B cell (primary cell): ENCODE measurements at regions of chr3 and their contacts with region 1.

Region 1: GRCh38 chr3:141738022-141738890 is at the start of gene RNF7:
- DNase-seq: peak; percentile 98
- ATAC-seq: peak; percentile 95
- H3K4me3 ChIP-seq: peak within 1 kb of the TSS; percentile 93 to 99 (median 95)
- H3K4me3 Mint-ChIP-seq: peak within 1 kb of the TSS; percentile 90
- H3K27ac ChIP-seq: peak within 1 kb of the TSS; percentile 81 to 87
- H3K27ac Mint-ChIP-seq: peak within 1 kb of the TSS; percentile 97
- H3K4me1 ChIP-seq: peaks cover 23 to 30% of the 10 kb centered on the region in 2 donors
- H3K4me1 Mint-ChIP-seq: peaks cover 44% of the 10 kb centered on the region
- H3K27me3 ChIP-seq: no peaks in the 10 kb centered on the region
- H3K27me3 Mint-ChIP-seq: no peaks in the 10 kb centered on the region
- CTCF ChIP-seq: peak; percentile 85
- total RNA-seq, gene RNF7: 40.9 and 47.2 TPM in 2 replicates

Region 2: DNA sequence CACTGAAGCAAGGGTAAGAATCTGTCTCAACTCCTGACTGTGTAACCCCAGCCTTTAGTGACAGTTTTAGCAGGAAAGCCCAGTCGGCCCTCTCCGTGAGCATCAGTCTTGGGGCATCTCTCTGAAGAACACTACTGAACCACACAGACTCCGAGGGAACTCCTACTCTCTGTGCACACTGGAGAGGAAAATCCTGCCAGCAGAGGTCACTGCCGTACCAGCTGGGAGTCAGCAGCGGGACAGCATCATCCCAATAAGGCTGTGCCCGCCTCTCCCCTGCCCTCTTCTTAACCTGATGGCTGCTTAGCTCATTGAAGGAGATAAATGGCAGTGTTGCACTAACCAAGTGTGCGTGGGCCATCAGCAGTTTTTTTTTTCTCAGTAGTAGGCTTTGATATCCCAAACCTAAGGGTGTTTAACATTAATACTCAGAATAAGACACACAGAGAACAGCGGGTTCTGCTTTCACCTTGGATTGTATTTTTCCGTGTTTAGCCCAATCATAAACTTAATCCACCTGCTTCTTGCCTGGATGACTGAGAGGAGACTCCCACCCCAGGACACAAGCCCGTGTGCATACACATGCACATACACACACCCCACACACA is 278.1 kb before region 1 on chr3:
- CTCF ChIA-PET with region 1: no interaction called
- POLR2A ChIA-PET with region 1: no interaction called
- intact Hi-C with region 1: loop called (anchors 1 kb)
- DNase-seq: peak; percentile 85
- ATAC-seq: peak; percentile 99
- H3K4me3 ChIP-seq: no peak overlapping the region
- H3K4me3 Mint-ChIP-seq: no peak overlapping the region
- H3K27ac ChIP-seq: no peak overlapping the region
- H3K27ac Mint-ChIP-seq: no peak overlapping the region
- H3K4me1 ChIP-seq: peaks cover 9 to 10% of the 10 kb centered on the region in 2 donors
- H3K4me1 Mint-ChIP-seq: peaks cover 13% of the 10 kb centered on the region
- H3K27me3 ChIP-seq: no peaks in the 10 kb centered on the region
- H3K27me3 Mint-ChIP-seq: no peaks in the 10 kb centered on the region
- CTCF ChIP-seq: peak; percentile 92

Region 3: GRCh38 chr3:141796081-141796888 is 58.0 kb after region 1 on chr3:
- CTCF ChIA-PET with region 1: interaction called, 3 read pairs
- POLR2A ChIA-PET with region 1: no interaction called
- intact Hi-C with region 1: loop called (anchors 1 kb)
- DNase-seq: peak; percentile 68
- ATAC-seq: peak; percentile 88
- H3K4me3 ChIP-seq: peak overlapping the region in 3 of 5 experiments; percentile 53 to 62 (median 61)
- H3K4me3 Mint-ChIP-seq: peak overlapping the region; percentile 85
- H3K27ac ChIP-seq: peak overlapping the region; percentile 19 to 50
- H3K27ac Mint-ChIP-seq: peak overlapping the region; percentile 93
- H3K4me1 ChIP-seq: peaks cover 21 to 26% of the 10 kb centered on the region in 2 donors
- H3K4me1 Mint-ChIP-seq: peaks cover 34% of the 10 kb centered on the region
- H3K27me3 ChIP-seq: no peaks in the 10 kb centered on the region
- H3K27me3 Mint-ChIP-seq: no peaks in the 10 kb centered on the region
- CTCF ChIP-seq: no peak

Region 4: DNA sequence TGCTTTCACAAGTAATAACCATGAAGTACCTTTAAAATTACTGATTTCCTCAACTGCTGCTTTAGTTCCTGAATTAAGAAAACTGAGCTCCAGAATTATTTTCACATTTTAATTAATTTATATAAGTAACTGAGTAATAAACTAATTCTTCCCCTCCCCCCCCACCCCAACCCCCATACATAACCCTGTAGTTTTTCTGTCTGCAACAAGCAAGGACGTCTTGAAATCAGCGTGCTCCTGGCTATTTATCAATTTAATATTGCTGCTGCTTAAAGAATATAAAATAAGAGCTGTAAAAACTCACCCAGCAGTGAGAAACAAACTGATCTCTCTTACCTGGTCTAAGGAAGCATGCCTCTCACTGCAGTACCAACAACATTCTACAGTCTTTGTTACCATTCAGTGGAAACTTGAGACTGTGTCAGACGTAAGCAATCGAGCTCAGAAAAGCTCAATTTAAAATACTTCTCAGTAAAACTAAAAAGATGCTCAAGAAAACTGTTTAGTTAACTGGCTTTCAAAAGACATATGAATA is 290.1 kb after region 1 on chr3:
- CTCF ChIA-PET with region 1: no interaction called
- POLR2A ChIA-PET with region 1: no interaction called
- intact Hi-C with region 1: loop called (anchors 2 kb)
- DNase-seq: peak; percentile 73
- ATAC-seq: peak; percentile 69
- H3K4me3 ChIP-seq: peak overlapping the region; percentile 26 to 72 (median 56)
- H3K4me3 Mint-ChIP-seq: peak overlapping the region; percentile 90
- H3K27ac ChIP-seq: no peak overlapping the region
- H3K27ac Mint-ChIP-seq: peak overlapping the region; percentile 21
- H3K4me1 ChIP-seq: peaks cover 3% of the 10 kb centered on the region in 2 donors
- H3K4me1 Mint-ChIP-seq: peaks cover 24% of the 10 kb centered on the region
- H3K27me3 ChIP-seq: no peaks in the 10 kb centered on the region
- H3K27me3 Mint-ChIP-seq: no peaks in the 10 kb centered on the region
- CTCF ChIP-seq: no peak

Region 5: GRCh38 chr3:142447852-142448823 is 709.9 kb after region 1 on chr3 and contains the start of gene XRN1:
- CTCF ChIA-PET with region 1: interaction called, 3 read pairs
- POLR2A ChIA-PET with region 1: no interaction called
- intact Hi-C with region 1: loop called (anchors 2 kb)
- DNase-seq: peak; percentile 94
- ATAC-seq: peak; percentile 98
- H3K4me3 ChIP-seq: peak within 1 kb of the TSS; percentile 85 to 100 (median 98)
- H3K4me3 Mint-ChIP-seq: peak within 1 kb of the TSS; percentile 99
- H3K27ac ChIP-seq: peak within 1 kb of the TSS; percentile 97 to 100
- H3K27ac Mint-ChIP-seq: peak within 1 kb of the TSS; percentile 100
- H3K4me1 ChIP-seq: peaks cover 18 to 24% of the 10 kb centered on the region in 2 donors
- H3K4me1 Mint-ChIP-seq: peaks cover 41% of the 10 kb centered on the region
- H3K27me3 ChIP-seq: no peaks in the 10 kb centered on the region
- H3K27me3 Mint-ChIP-seq: no peaks in the 10 kb centered on the region
- CTCF ChIP-seq: no peak
- total RNA-seq, gene XRN1: 78.6 and 91.8 TPM in 2 replicates

Region 6: DNA sequence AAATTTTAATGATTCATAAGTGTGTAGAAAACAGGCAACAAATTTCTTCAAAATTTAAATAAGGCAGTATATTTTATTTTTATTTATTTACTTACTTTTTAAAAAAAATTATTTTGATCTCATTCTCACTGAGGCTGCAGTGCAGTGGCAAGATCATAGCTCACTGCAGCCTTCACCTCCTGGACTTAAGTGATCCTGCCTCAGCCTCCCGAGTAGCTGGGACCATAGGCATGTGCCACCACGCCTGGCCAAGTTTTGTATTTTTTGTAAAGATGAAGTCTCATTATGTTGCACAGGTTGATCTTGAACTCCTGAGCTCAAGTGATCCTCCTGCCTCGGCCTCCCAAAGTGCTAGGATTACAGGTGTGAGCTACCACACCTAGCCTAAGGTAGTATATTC is 770.8 kb after region 1 on chr3:
- CTCF ChIA-PET with region 1: no interaction called
- POLR2A ChIA-PET with region 1: no interaction called
- intact Hi-C with region 1: no loop called
- DNase-seq: no peak
- ATAC-seq: no peak
- H3K4me3 ChIP-seq: no peak overlapping the region
- H3K4me3 Mint-ChIP-seq: no peak overlapping the region
- H3K27ac ChIP-seq: no peak overlapping the region
- H3K27ac Mint-ChIP-seq: no peak overlapping the region
- H3K4me1 ChIP-seq: no peaks in the 10 kb centered on the region
- H3K4me1 Mint-ChIP-seq: no peaks in the 10 kb centered on the region
- H3K27me3 ChIP-seq: no peaks in the 10 kb centered on the region
- H3K27me3 Mint-ChIP-seq: no peaks in the 10 kb centered on the region
- CTCF ChIP-seq: no peak

Region 7: DNA sequence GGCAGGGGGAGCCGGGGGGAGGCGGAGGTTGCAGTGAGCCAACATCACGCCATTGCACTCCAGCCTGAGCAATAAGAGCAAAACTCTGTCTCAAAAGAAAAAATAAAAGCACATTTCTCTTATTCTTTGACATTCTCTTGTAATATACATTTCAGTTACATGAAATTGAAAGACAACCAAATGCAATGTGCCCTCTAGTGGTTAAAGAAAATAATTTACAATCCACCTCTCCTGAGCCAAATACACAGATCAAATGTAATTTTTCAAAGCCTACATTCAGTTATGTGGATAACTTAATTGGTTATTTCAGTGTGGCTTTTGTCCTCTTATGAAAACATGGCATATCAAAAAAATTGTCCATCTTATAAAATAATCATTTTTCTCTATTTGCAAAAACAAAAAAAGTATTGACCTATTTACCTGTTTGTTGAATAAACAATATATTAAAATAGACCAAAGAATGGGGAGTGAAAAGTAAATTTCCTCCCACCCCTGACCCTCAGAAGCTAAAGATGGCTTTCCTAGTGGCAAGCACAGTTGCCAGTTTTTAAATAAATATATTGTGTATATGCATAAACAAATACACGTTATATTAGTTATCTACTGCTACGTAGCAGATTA is 1248.9 kb after region 1 on chr3:
- CTCF ChIA-PET with region 1: no interaction called
- POLR2A ChIA-PET with region 1: no interaction called
- intact Hi-C with region 1: no loop called
- DNase-seq: peak; percentile 50
- ATAC-seq: no peak
- H3K4me3 ChIP-seq: no peak overlapping the region
- H3K4me3 Mint-ChIP-seq: no peak overlapping the region
- H3K27ac ChIP-seq: no peak overlapping the region
- H3K27ac Mint-ChIP-seq: no peak overlapping the region
- H3K4me1 ChIP-seq: no peaks in the 10 kb centered on the region
- H3K4me1 Mint-ChIP-seq: no peaks in the 10 kb centered on the region
- H3K27me3 ChIP-seq: no peaks in the 10 kb centered on the region
- H3K27me3 Mint-ChIP-seq: peaks cover 5% of the 10 kb centered on the region
- CTCF ChIP-seq: peak; percentile 77